ENCODE measurements at regions of chr2 and their contacts with region 1.

Region 1: DNA sequence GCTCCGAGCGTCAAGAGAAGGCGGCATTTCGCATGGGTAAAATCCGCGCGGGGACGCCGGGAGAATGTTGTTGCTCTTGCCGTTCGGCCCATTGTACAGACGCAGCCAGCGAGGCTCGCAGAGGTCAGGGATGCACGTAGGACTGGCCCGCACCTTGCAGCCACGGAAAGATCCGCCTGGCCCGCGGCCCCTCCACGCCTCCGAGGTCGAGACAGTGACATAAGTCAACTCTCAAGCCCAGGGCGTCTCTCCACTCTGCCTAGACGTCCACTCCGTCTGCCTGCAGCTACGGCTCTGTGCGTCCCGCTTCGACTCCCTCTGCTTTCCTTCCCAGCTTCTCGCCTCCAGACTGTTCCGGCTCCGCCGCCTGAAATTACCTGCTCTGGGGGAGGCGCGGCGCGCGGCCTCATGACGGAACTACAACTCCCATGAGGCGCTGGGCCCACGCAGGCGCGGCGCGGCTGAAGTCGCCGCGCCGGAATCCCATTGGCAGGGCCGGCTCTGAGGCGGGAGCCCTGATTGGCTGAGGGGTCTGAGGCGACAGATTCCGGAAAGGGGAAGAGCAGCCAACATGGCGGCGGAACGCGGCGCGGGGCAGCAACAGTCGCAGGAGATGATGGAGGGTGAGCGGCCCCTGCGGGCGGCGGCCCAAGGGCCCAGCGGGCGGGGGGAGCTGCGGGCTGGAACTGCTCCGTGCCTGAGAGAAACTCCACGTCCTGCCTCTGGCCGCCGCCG is at the start of gene PPP1R7:
- DNase-seq: peak; percentile 91 to 95 (median 92)
- ATAC-seq: peak; percentile 92
- H3K4me3 ChIP-seq: peak within 1 kb of the TSS; percentile 98
- H3K27ac ChIP-seq: peak within 1 kb of the TSS; percentile 58
- H3K4me1 ChIP-seq: peaks cover 14 to 26% of the 10 kb centered on the region in 2 experiments; a peak in 4 of 5 replicates
- H3K27me3 ChIP-seq: no peaks in the 10 kb centered on the region
- CTCF ChIP-seq: peak in 2 of 3 experiments; percentile 12 to 17; a peak in 1 of 6 replicates
- EP300 ChIP-seq: no peak
- POLR2A ChIP-seq: peak; percentile 74
- RAD21 ChIP-seq: no peak
- polyA plus RNA-seq, gene PPP1R7: 37.9 to 50.5 TPM

Region 2: DNA sequence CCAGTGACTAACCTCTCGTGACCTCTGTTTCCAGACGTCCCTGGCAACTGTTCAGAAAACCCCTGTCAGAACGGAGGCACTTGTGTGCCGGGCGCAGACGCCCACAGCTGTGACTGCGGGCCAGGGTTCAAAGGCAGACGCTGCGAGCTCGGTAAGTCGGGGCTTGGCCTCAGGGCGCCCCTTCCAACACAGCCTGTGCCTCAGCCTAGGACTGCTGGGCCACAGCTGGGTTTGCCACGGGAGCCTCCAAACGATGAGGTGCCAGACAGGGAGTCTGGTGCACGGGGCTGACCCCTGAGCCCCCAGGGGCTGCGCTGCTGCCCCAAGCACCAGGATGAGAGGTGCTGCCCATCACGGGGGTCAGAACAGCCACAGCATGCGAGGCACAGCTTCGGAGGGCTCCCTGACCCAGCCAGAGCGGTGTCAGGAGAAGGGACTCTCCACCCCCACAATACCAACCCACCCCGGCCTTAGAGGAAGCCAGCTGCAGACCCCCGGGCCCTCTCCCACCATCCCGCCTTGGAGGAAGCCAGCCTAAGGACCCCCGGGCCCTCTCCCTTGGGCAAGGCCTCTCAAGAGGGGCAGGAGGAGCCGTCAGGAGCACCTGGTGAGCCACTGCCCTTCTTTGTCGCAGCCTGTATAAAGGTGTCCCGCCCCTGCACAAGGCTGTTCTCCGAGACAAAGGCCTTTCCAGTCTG is 68.3 kb before region 1 on chr2:
- CTCF ChIA-PET with region 1: no interaction called
- POLR2A ChIA-PET with region 1: no interaction called
- in situ Hi-C with region 1: no loop called
- intact Hi-C with region 1: loop called (anchors 1 kb)
- DNase-seq: no peak
- ATAC-seq: no peak
- H3K4me3 ChIP-seq: no peak overlapping the region
- H3K27ac ChIP-seq: no peak overlapping the region
- H3K4me1 ChIP-seq: peaks cover 0 to 7% of the 10 kb centered on the region in 2 experiments; a peak in 2 of 5 replicates
- H3K27me3 ChIP-seq: no peaks in the 10 kb centered on the region
- CTCF ChIP-seq: no peak
- EP300 ChIP-seq: no peak
- POLR2A ChIP-seq: no peak
- RAD21 ChIP-seq: no peak

Measured in K562 (cell line).